ENCODE measurements at regions of chr1 and their contacts with region 1.

Region 1: DNA sequence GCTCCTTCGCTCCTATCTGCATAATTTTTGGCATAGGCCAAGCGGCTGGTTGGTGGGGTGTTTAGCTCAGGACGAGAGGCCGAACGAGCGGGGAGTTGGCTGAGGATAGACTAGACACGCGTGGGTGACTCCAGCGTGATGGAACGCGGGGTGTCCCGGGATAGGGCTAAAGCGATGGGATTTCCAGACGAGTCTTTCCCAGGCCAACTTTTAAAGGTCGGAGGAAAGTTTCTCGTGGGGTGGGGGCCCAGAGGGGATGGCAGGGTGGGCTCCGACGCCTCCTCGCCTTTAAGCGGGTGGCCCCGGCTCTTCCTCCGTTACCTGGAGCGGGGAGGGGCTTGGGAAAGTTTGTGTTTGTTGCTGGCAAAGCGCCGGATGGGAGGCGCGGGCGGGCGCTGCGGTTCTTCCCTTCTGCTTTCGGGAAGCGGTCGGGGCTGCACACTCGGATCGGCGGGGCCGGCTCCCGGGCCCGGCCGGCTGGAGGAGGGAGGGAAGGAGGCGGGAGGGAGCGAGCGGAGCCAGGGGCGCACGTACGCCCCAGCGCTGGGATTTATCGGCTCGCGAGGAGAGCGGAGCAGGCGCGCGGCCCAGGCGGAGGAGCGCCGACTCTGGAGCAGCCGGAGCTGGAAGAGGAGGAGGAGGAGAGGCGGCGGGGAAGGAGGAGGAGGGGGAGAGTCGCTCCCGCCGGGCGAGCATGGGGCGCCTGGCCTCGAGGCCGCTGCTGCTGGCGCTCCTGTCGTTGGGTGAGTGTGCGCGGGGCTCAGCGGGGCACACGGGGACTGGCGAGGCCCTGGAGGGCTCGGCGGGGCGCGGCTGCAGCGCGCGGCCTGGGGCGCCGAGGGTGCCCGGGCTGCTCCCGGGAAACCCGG is at the start of gene PTGFRN:
- DNase-seq: peak; percentile 89
- H3K4me3 ChIP-seq: peak within 1 kb of the TSS; percentile 65 to 88 (median 78)
- H3K27ac ChIP-seq: peak within 1 kb of the TSS; percentile 92 to 98 (median 94)
- H3K4me1 ChIP-seq: peaks cover 0 to 55% (median 50%) of the 10 kb centered on the region in 4 donors
- H3K27me3 ChIP-seq: no peaks in the 10 kb centered on the region
- CTCF ChIP-seq: no peak
- EP300 ChIP-seq: no peak
- POLR2A ChIP-seq: peak; percentile 44 to 64
- total RNA-seq, gene PTGFRN: 77.3 to 179 (median 109) TPM

Region 2: GRCh38 chr1:116853670-116854402 is 55.9 kb before region 1 on chr1:
- intact Hi-C with region 1: loop called (anchors 5 kb)
- DNase-seq: no peak
- H3K4me3 ChIP-seq: no peak overlapping the region
- H3K27ac ChIP-seq: peak overlapping the region in 3 of 4 donors; percentile 34 to 46 (median 42)
- H3K4me1 ChIP-seq: peaks cover 2 to 36% (median 34%) of the 10 kb centered on the region in 4 donors
- H3K27me3 ChIP-seq: no peaks in the 10 kb centered on the region
- CTCF ChIP-seq: no peak
- EP300 ChIP-seq: no peak
- POLR2A ChIP-seq: no peak

Region 3: GRCh38 chr1:116951200-116951935 is 41.6 kb after region 1 on chr1:
- intact Hi-C with region 1: loop called (anchors 5 kb)
- DNase-seq: peak; percentile 85
- H3K4me3 ChIP-seq: peak overlapping the region in 3 of 4 donors; percentile 18 to 34 (median 24)
- H3K27ac ChIP-seq: peak overlapping the region; percentile 82 to 89 (median 86)
- H3K4me1 ChIP-seq: peaks cover 0 to 95% (median 65%) of the 10 kb centered on the region in 4 donors
- H3K27me3 ChIP-seq: no peaks in the 10 kb centered on the region
- CTCF ChIP-seq: no peak
- EP300 ChIP-seq: no peak
- POLR2A ChIP-seq: no peak

Region 4: GRCh38 chr1:117059678-117060440 is 150.1 kb after region 1 on chr1 and contains the start of gene TTF2:
- intact Hi-C with region 1: loop called (anchors 5 kb)
- DNase-seq: peak; percentile 97
- H3K4me3 ChIP-seq: peak within 1 kb of the TSS; percentile 57 to 89 (median 62)
- H3K27ac ChIP-seq: peak within 1 kb of the TSS; percentile 70 to 87 (median 79)
- H3K4me1 ChIP-seq: peaks cover 0 to 10% (median 7%) of the 10 kb centered on the region in 4 donors
- H3K27me3 ChIP-seq: no peaks in the 10 kb centered on the region
- CTCF ChIP-seq: peak in 2 of 4 experiments; percentile 21 to 35
- EP300 ChIP-seq: no peak
- POLR2A ChIP-seq: no peak
- total RNA-seq, gene TTF2: 7.8 to 19.3 (median 8.7) TPM

Region 5: DNA sequence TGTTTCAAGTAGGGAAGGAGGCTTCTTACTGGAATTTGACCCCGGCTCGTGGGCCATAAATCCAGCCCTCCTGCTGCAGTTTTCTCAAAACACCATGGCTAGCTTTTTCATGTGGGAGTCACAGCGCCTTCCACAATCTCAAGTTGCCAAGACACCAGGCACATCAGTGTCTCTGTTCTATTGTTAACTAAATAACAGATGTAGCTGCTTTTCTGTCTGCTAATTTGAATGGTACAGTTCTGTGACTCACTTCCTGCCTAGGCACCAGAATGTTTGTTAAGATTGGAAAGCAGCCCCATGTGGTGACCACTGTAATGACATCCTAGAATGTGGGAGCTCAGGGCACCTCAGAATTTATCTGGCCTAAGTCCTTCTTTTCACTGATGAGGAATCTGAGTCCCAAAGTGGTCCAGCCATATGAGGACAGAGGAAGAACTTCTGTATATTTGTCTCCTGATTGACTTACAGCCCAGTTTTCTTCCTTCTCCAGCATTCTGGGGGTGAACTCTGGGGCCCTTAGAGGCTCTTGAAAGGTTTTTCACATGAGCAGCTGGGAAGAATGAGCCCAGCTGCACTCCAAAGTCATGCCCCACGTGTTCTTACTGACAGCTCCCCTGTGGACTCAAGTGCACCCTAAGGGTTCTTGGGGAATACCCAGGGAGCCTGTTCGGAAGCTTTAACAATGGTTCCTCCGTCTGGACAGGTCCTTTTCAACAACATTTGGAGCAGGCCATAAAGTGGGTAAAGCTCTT is 184.3 kb after region 1 on chr1:
- intact Hi-C with region 1: no loop called
- DNase-seq: no peak
- H3K4me3 ChIP-seq: no peak overlapping the region
- H3K27ac ChIP-seq: peak overlapping the region; percentile 54 to 74 (median 66)
- H3K4me1 ChIP-seq: peaks cover 0 to 15% (median 14%) of the 10 kb centered on the region in 4 donors
- H3K27me3 ChIP-seq: no peaks in the 10 kb centered on the region
- CTCF ChIP-seq: no peak
- EP300 ChIP-seq: no peak
- POLR2A ChIP-seq: no peak

Region 6: GRCh38 chr1:117821782-117822447 is 912.2 kb after region 1 on chr1:
- intact Hi-C with region 1: loop called (anchors 10 kb)
- DNase-seq: peak; percentile 82
- H3K4me3 ChIP-seq: no peak overlapping the region
- H3K27ac ChIP-seq: peak overlapping the region; percentile 78 to 86 (median 82)
- H3K4me1 ChIP-seq: peaks cover 0 to 57% (median 41%) of the 10 kb centered on the region in 4 donors
- H3K27me3 ChIP-seq: no peaks in the 10 kb centered on the region
- CTCF ChIP-seq: no peak
- EP300 ChIP-seq: peak in 3 of 4 donors; percentile 33 to 84 (median 70)
- POLR2A ChIP-seq: no peak